ENCODE measurements at regions of chr11 and their contacts with region 1.

Region 1: DNA sequence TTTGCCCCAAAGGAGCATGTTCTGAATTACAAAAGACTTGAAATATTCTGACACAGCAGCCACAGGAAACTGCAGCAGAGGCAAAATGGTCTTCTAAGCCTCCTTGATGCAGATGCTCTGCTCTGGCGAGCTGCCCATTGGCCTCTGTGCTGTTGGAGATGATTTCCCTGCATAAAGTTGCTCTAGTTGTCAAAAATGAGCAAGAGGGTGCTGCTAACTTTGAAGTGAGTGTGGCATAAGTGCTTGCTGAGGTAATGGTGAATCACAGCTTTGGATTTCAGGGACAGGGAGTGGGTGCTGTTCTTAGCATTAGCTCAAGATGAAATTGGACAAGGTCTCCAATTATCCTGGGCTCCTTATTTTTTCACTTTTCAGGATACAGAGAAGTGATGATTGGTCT is 435.4 kb downstream of the TMEM135 start:
- DNase-seq: peak; percentile 61
- H3K4me3 ChIP-seq: no peak overlapping the region
- H3K27ac ChIP-seq: no peak overlapping the region
- H3K4me1 ChIP-seq: no peaks in the 10 kb centered on the region
- H3K27me3 ChIP-seq: no peaks in the 10 kb centered on the region
- CTCF ChIP-seq: no peak

Region 2: GRCh38 chr11:86869966-86870570 is 603.1 kb before region 1 on chr11:
- CTCF ChIA-PET with region 1: no interaction called
- dilution Hi-C with region 1: no loop called
- in situ Hi-C with region 1: no loop called
- intact Hi-C with region 1: no loop called
- DNase-seq: peak; percentile 19
- H3K4me3 ChIP-seq: no peak overlapping the region
- H3K27ac ChIP-seq: no peak overlapping the region
- H3K4me1 ChIP-seq: peaks cover 6% of the 10 kb centered on the region
- H3K27me3 ChIP-seq: no peaks in the 10 kb centered on the region
- CTCF ChIP-seq: peak; percentile 83 to 86

Region 3: GRCh38 chr11:87219266-87219665 is 253.9 kb before region 1 on chr11:
- CTCF ChIA-PET with region 1: no interaction called
- dilution Hi-C with region 1: no loop called
- in situ Hi-C with region 1: no loop called
- intact Hi-C with region 1: no loop called
- DNase-seq: no peak
- H3K4me3 ChIP-seq: no peak overlapping the region
- H3K27ac ChIP-seq: no peak overlapping the region
- H3K4me1 ChIP-seq: no peaks in the 10 kb centered on the region
- H3K27me3 ChIP-seq: no peaks in the 10 kb centered on the region
- CTCF ChIP-seq: no peak

Region 4: DNA sequence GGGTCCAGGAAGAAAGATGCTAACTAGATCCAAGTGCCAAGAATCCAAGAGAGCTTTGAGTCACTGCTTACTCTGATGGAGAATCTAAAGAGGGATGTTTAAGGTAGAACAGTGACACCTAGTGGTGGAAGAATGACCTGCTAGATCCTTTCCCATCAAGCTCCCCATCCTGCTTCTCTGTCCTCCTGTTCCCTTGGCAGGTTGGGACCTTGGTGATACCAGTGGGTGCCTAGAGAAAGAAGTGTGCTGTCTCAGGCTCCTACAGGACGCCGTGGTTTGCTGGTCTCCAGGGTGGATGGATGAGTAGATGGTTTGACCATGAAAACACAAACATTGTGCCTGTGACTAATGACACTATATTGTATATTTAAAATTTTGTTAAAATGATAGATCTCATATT is 51.8 kb before region 1 on chr11:
- CTCF ChIA-PET with region 1: no interaction called
- dilution Hi-C with region 1: no loop called
- in situ Hi-C with region 1: no loop called
- intact Hi-C with region 1: no loop called
- DNase-seq: peak; percentile 64
- H3K4me3 ChIP-seq: no peak overlapping the region
- H3K27ac ChIP-seq: no peak overlapping the region
- H3K4me1 ChIP-seq: no peaks in the 10 kb centered on the region
- H3K27me3 ChIP-seq: no peaks in the 10 kb centered on the region
- CTCF ChIP-seq: peak; percentile 62 to 79

Region 5: DNA sequence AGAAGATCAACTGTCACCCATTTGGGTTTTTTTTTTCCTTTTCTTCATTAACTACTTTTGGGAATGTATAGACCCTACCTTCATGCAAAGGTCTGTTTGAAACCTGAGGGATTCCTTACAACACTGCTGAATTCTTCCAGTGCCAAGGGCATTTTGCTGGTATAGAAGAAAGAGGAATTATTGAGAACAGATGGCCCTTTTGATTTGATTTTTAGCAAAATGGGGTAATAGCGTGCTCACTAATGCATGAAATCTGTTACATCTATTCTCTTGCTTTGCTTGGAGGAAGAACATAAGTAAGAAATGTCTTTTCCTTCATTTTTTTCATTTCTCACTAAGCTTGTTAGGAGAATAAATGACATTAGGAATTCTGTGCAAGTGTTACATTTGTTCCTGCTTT is 66.4 kb after region 1 on chr11:
- CTCF ChIA-PET with region 1: no interaction called
- dilution Hi-C with region 1: loop called (anchors 5 kb)
- in situ Hi-C with region 1: no loop called
- intact Hi-C with region 1: no loop called
- DNase-seq: no peak
- H3K4me3 ChIP-seq: no peak overlapping the region
- H3K27ac ChIP-seq: no peak overlapping the region
- H3K4me1 ChIP-seq: no peaks in the 10 kb centered on the region
- H3K27me3 ChIP-seq: peaks cover 4% of the 10 kb centered on the region
- CTCF ChIP-seq: no peak

Region 6: DNA sequence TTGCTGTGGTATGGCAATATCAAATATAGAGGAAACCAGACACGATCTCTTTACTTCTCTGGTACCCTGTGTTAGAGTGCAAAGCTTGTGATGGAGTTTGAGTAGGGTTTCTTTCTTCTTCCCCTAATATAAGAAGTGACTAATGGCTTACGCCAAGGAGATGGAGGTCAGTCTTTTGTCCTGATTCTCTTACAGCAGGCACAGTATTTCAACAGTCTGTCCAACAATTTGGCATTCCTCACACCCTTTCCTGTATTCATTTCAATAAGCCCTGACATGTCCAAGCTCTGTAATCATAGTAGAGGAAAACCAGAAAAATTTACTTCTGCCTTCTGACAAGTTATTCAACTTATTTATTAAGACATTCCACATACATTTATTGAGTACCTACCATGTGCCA is 110.8 kb after region 1 on chr11:
- CTCF ChIA-PET with region 1: no interaction called
- dilution Hi-C with region 1: no loop called
- in situ Hi-C with region 1: no loop called
- intact Hi-C with region 1: loop called (anchors 5 kb)
- DNase-seq: peak; percentile 85
- H3K4me3 ChIP-seq: no peak overlapping the region
- H3K27ac ChIP-seq: peak overlapping the region; percentile 61
- H3K4me1 ChIP-seq: peaks cover 16% of the 10 kb centered on the region
- H3K27me3 ChIP-seq: no peaks in the 10 kb centered on the region
- CTCF ChIP-seq: no peak